Dorsolateral prefrontal cortex (tissue), 120 donors: ENCODE measurements at regions of chr4 and their contacts with region 1.

Region 1: GRCh38 chr4:26719954-26720552 is 136.2 kb downstream of the TBC1D19 start:
- DNase-seq: no peak
- H3K4me3 ChIP-seq: no peak overlapping the region
- H3K27ac ChIP-seq: no peak overlapping the region
- H3K27me3 ChIP-seq: no peaks in the 10 kb centered on the region
- CTCF ChIP-seq: peak; percentile 19 to 79 (median 63)

Region 2: DNA sequence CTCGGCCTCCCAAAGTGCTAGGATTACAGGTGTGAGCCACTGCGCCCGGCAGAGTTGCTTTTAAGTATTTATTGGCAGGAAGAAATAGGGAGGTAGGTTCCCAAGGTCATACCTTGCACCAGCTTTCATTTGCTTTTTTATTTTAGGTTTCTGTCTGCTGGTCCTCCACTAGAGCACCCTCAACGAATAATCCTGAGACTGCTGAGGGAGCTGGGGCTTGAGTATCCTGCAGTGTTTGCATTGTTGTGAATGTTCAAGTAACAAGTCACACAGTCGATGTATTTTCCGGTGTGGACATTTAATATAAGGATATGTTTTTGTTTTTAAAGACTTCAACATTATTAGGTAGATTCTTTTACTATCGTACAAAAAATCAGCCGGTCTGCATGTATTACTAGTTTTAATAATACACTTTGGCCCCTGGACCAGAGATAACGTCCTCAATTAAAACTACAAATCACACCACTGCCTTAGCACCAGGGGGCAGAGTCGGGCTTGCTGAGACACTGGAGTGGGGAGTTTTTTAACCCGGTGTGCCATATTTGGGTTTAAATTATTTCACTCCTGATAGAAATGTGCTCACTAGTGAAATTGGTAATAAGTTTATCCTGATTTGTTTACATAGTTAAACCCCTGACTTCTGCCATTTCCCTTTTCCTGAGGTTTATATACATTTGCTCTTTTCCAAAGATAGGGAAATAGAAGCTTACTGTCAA is 794.4 kb before region 1 on chr4:
- intact Hi-C with region 1: loop called in 1 of 2 experiments (anchors 10 kb)
- DNase-seq: peak in 8 of 10 donors; percentile 40 to 70 (median 56)
- H3K4me3 ChIP-seq: peak overlapping the region in 7 of 59 donors; percentile 1 to 26 (median 16)
- H3K27ac ChIP-seq: peak overlapping the region in 28 of 59 donors; percentile 12 to 86 (median 46)
- H3K27me3 ChIP-seq: no peaks in the 10 kb centered on the region
- CTCF ChIP-seq: peak; percentile 15 to 78 (median 67)

Region 3: GRCh38 chr4:25993395-25994185 is 726.5 kb before region 1 on chr4:
- intact Hi-C with region 1: loop called in 1 of 2 experiments (anchors 5 kb)
- DNase-seq: no peak
- H3K4me3 ChIP-seq: no peak overlapping the region
- H3K27ac ChIP-seq: no peak overlapping the region
- H3K27me3 ChIP-seq: no peaks in the 10 kb centered on the region
- CTCF ChIP-seq: peak in 5 of 56 donors; percentile 7 to 30 (median 25)

Region 4: GRCh38 chr4:26028793-26029567 is 691.1 kb before region 1 on chr4:
- intact Hi-C with region 1: loop called in 1 of 2 experiments (anchors 10 kb)
- DNase-seq: peak in 7 of 10 donors; percentile 18 to 73 (median 49)
- H3K4me3 ChIP-seq: peak overlapping the region in 17 of 59 donors; percentile 7 to 44 (median 27)
- H3K27ac ChIP-seq: no peak overlapping the region
- H3K27me3 ChIP-seq: peaks cover 0 to 6% (median 0%) of the 10 kb centered on the region in 45 donors
- CTCF ChIP-seq: peak in 54 of 56 donors; percentile 26 to 78 (median 57)

Region 5: DNA sequence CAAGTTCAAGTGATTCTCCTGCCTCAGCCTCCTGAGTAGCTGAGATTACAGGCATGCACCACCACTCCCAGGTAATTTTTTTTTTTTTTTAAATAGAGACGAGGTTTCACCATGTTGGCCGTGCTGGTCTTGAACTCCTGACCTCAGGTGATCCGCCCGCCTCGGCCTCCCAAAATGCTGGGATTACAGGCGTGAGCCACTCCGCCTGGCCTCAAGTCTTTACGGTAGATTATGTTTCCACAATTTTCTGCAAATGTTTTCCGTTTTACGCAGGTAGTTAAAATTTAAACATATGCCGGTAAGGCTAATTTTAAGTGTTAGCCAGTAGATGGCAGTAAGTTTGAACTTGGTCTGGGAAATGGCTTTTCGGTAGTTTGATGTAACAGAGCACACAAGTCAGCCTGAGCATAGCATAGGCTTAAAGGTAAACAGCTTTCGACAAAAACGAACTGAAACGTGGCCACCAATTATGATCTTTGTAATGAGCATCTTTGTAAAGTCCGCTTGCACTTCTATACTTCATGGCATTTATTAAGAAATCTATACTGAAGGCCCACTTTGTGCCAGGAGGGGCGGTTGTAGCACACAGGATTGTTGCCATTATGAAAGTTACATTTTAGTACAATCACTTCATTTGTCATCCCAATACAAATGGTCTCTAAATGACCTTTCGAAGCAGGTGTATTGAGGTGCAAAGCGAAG is 260.8 kb before region 1 on chr4:
- intact Hi-C with region 1: loop called (anchors 10 kb)
- DNase-seq: no peak
- H3K4me3 ChIP-seq: no peak overlapping the region
- H3K27ac ChIP-seq: no peak overlapping the region
- H3K27me3 ChIP-seq: no peaks in the 10 kb centered on the region
- CTCF ChIP-seq: peak in 55 of 56 donors; percentile 31 to 71 (median 51)